T-cell (primary cell): ENCODE measurements at regions of chr6 and their contacts with region 1.

Region 1: GRCh38 chr6:136701045-136701444 is 91.2 kb downstream of the MAP3K5 start:
- DNase-seq: no peak
- ATAC-seq: no peak
- H3K4me3 ChIP-seq: no peak overlapping the region
- H3K4me3 Mint-ChIP-seq: no peak overlapping the region
- H3K27ac ChIP-seq: no peak overlapping the region
- H3K27ac Mint-ChIP-seq: peak overlapping the region in 1 of 2 donors; percentile 47
- H3K4me1 ChIP-seq: no peaks in the 10 kb centered on the region
- H3K4me1 Mint-ChIP-seq: peaks cover 26 to 35% (median 27%) of the 10 kb centered on the region in 3 donors
- H3K27me3 ChIP-seq: no peaks in the 10 kb centered on the region
- H3K27me3 Mint-ChIP-seq: no peaks in the 10 kb centered on the region

Region 2: GRCh38 chr6:136396908-136397307 is 304.1 kb before region 1 on chr6:
- CTCF ChIA-PET with region 1: no interaction called
- POLR2A ChIA-PET with region 1: interaction called in 1 of 2 experiments, 10 read pairs
- DNase-seq: no peak
- ATAC-seq: no peak
- H3K4me3 ChIP-seq: no peak overlapping the region
- H3K4me3 Mint-ChIP-seq: no peak overlapping the region
- H3K27ac ChIP-seq: no peak overlapping the region
- H3K27ac Mint-ChIP-seq: no peak overlapping the region
- H3K4me1 ChIP-seq: no peaks in the 10 kb centered on the region
- H3K4me1 Mint-ChIP-seq: no peaks in the 10 kb centered on the region
- H3K27me3 ChIP-seq: peaks cover 0 to 2% of the 10 kb centered on the region in 2 experiments
- H3K27me3 Mint-ChIP-seq: peaks cover 3 to 6% of the 10 kb centered on the region in 2 donors

Region 3: DNA sequence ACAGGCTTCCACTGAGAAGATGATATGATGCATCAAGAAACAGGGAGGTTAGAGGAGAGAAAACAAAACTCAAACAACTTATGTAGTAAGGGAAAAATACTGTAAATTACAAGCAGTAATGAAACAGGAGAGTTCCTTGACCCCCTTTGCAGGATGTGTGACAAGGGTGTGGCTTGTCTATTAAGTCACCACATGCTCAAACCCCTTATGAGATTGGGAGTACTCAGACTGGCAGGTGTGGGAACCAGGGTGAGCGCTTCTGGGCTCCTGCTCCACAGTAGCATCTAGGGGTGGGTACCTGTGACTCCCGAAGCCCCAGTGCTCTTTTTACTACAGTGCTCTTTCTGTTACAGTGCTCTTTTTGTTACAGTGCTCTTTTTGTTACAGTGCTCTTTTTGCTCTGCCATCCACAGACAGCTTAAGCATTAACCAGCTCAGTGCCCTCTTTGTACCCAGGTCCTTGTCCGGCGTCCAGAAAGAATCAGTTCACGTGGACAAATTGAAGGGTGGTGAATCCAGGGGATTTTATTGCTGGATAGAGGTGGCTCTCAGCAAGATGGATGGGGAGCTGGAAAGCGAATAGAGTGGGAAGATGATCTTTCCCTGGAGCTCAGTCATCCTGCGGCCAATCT is 764.4 kb after region 1 on chr6:
- CTCF ChIA-PET with region 1: no interaction called
- POLR2A ChIA-PET with region 1: no interaction called
- DNase-seq: no peak
- ATAC-seq: no peak
- H3K4me3 ChIP-seq: no peak overlapping the region
- H3K4me3 Mint-ChIP-seq: no peak overlapping the region
- H3K27ac ChIP-seq: no peak overlapping the region
- H3K27ac Mint-ChIP-seq: no peak overlapping the region
- H3K4me1 ChIP-seq: no peaks in the 10 kb centered on the region
- H3K4me1 Mint-ChIP-seq: no peaks in the 10 kb centered on the region
- H3K27me3 ChIP-seq: no peaks in the 10 kb centered on the region
- H3K27me3 Mint-ChIP-seq: peaks cover 15 to 25% of the 10 kb centered on the region in 2 donors